ENCODE measurements at regions of chr2 and their contacts with region 1.

Region 1: DNA sequence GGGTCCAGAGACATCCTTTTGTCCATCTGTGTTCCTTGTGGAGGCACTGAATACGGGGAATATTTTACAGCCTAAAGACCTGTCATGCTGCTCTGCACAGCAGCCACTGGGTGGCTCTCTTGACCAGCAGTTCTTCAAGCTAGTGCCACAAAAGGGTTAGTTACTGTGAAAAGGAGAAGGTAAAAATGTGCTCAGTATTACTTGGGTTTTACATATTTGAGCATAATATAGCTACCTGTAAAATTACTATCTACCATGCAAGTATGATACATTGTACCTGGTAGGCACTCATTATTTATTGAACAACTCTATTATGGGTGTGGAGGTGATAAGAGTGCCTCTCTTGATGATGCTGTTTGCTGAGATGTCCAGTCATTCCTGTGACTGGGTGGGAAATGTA is 23.6 kb downstream of the FZD5 start:
- DNase-seq: peak; percentile 74
- H3K4me3 Mint-ChIP-seq: no peak overlapping the region
- H3K27ac Mint-ChIP-seq: no peak overlapping the region
- H3K4me1 Mint-ChIP-seq: no peaks in the 10 kb centered on the region
- H3K27me3 Mint-ChIP-seq: no peaks in the 10 kb centered on the region
- CTCF ChIP-seq: peak; percentile 89

Region 2: DNA sequence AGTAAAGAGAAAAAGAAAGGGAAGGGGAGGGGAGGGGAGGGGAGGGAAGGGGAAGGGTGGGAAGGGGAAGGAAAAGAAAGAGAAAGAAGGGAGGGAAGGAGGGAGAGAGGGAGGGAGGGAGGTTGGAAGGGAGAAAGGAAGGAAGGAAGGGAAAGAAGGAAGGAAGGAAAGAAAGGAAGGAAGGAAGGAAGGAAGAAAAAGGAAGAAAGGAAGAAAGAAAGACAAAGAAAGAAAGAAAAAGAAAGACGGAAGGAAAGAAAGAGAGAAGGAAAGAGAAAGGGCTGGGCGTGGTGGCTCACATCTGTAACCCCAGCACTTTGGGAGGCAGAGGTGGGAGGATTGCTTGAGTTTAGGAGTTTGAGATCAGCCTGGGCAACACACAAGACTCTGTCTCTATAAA is 59.3 kb before region 1 on chr2:
- CTCF ChIA-PET with region 1: no interaction called
- POLR2A ChIA-PET with region 1: no interaction called
- intact Hi-C with region 1: no loop called
- DNase-seq: no peak
- H3K4me3 Mint-ChIP-seq: no peak overlapping the region
- H3K27ac Mint-ChIP-seq: no peak overlapping the region
- H3K4me1 Mint-ChIP-seq: peaks cover 6% of the 10 kb centered on the region
- H3K27me3 Mint-ChIP-seq: no peaks in the 10 kb centered on the region
- CTCF ChIP-seq: no peak

Region 3: DNA sequence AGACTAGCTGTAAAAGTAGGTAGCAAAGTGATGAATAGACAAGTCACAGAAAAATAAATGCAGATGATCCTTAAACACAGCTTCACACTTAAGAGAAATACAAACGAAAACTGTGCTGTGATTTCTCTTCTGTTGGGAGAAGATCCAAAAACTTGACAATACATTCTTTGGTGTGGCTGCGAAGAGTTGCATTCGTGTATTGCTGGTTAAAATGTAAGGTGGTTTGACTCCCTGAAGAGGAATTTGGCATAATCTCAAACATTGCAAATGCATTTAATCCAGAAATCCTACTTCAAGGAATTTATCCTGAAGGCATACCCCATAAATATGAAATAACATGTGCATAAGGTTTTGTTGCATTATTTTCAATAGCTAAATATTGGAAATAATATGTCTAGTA is 27.6 kb before region 1 on chr2:
- CTCF ChIA-PET with region 1: no interaction called
- POLR2A ChIA-PET with region 1: no interaction called
- intact Hi-C with region 1: no loop called
- DNase-seq: no peak
- H3K4me3 Mint-ChIP-seq: no peak overlapping the region
- H3K27ac Mint-ChIP-seq: peak overlapping the region; percentile 80
- H3K4me1 Mint-ChIP-seq: peaks cover 24% of the 10 kb centered on the region
- H3K27me3 Mint-ChIP-seq: no peaks in the 10 kb centered on the region
- CTCF ChIP-seq: no peak

Region 4: DNA sequence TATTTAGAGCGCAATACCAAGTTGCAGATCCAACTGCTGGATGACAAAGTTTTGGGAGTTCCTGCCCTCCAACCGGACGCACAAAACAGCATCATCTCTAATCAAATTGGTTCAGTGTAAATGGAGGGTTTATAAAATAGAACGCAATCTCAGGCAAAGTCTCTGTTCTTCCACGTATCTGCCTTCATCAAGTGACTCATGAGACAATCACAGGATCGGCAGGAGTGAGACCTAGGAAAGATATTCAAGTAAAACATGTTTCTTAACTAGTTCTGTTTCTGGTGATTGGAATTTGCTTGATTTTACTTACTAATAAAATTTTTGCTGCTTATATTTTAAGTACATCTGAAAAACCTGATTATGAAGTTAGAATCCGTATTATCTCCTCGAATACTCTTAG is 16.0 kb after region 1 on chr2:
- CTCF ChIA-PET with region 1: interaction called, 45 read pairs
- POLR2A ChIA-PET with region 1: interaction called, 4 read pairs
- intact Hi-C with region 1: no loop called
- DNase-seq: no peak
- H3K4me3 Mint-ChIP-seq: no peak overlapping the region
- H3K27ac Mint-ChIP-seq: no peak overlapping the region
- H3K4me1 Mint-ChIP-seq: peaks cover 2% of the 10 kb centered on the region
- H3K27me3 Mint-ChIP-seq: no peaks in the 10 kb centered on the region
- CTCF ChIP-seq: no peak

Region 5: GRCh38 chr2:207974216-207974605 is 228.1 kb after region 1 on chr2:
- CTCF ChIA-PET with region 1: interaction called, 57 read pairs
- POLR2A ChIA-PET with region 1: interaction called, 3 read pairs
- intact Hi-C with region 1: loop called (anchors 1 kb)
- DNase-seq: peak; percentile 57
- H3K4me3 Mint-ChIP-seq: no peak overlapping the region
- H3K27ac Mint-ChIP-seq: no peak overlapping the region
- H3K4me1 Mint-ChIP-seq: peaks cover 6% of the 10 kb centered on the region
- H3K27me3 Mint-ChIP-seq: no peaks in the 10 kb centered on the region
- CTCF ChIP-seq: no peak

Region 6: DNA sequence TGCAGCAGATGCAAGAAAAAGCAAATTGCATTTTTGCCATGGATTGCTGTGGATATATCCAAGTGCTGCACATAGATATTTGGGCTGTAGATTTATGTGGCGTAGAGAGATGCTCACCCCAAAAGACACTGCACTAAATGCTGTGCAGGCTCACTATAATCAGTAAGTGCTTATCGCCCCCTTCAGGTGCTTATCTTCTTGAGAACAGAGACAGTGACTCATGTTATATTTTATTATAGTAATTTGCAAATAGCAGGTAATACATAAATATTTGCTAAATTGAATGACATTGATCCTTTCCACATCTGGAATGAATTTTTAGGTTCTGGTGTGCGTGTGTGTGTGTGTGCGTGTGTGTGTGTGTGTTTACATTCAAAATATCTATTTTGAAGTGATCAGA is 316.0 kb after region 1 on chr2:
- CTCF ChIA-PET with region 1: interaction called, 159 read pairs
- POLR2A ChIA-PET with region 1: no interaction called
- intact Hi-C with region 1: no loop called
- DNase-seq: peak; percentile 50
- H3K4me3 Mint-ChIP-seq: no peak overlapping the region
- H3K27ac Mint-ChIP-seq: no peak overlapping the region
- H3K4me1 Mint-ChIP-seq: peaks cover 7% of the 10 kb centered on the region
- H3K27me3 Mint-ChIP-seq: peaks cover 16% of the 10 kb centered on the region
- CTCF ChIP-seq: no peak